ENCODE measurements at regions of chr5 and their contacts with region 1.

Region 1: DNA sequence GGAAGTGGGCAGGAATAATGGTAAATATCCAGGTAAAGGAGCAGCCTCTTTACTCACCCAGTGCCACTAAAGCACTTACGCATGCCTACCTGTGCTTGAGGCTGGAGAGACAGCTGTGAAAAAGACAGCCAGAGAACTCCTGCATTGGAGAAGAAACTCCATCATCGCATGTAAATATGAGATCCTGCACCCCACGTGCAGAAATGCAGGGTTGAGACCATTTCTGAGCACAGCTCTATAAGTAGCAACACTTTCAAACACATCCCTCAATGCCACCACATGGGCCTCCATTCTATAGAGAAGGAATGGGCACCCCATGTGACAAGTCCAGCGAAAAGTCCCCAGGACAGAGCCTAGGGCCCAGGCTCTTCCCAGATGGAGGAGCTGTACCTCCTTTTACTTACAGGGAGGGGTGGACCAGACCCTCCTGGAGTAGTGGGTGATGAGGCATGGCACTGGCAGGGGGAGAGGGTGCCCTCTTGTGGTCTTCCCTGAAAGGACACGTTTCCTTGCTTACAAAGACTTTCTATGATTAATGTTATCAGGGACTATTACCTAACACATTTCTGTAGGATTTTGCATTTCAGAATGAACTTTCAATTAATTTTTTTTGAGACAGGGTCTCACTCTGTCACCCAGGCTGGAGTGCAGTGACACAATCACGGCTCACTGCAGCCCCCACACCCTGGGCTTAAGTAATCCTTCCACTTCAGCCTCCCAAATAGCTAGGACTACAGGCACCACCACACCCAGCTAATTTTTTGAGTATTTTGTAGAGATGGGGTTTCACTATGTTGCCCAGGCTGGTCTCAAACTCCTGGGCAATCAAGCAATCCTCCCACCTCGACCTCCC is 55.3 kb upstream of the IL17B start:
- ATAC-seq: peak; percentile 2 to 83 (median 74)
- H3K4me3 ChIP-seq: no peak overlapping the region
- H3K27ac ChIP-seq: no peak overlapping the region
- H3K4me1 ChIP-seq: no peaks in the 10 kb centered on the region

Region 2: DNA sequence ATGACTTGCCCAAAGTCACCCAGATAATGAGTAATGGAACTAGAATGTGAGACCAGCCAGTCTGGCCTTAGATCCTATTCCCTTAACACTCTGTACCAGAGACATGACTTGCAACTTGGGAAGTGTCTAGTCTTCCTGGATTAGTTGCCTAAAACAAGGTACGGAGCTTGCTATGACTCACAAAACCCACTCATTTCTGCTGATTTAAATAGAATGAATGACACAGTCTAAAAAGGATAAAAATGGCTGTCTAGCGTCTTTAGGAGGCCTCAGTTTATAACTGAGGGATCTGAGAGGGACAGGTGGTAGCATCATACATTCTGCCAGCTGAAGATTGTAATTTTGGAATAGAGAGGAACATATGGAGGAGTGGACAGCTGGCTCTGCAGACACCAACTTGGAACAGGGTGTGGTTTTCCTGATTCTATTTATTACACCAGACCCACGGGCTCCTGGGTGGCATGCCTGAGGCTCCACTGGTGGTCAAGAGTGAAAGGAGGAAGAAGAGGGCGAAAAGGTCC is 230.4 kb before region 1 on chr5:
- in situ Hi-C with region 1: no loop called
- ATAC-seq: peak in 2 of 8 experiments; percentile 45 to 75
- H3K4me3 ChIP-seq: no peak overlapping the region
- H3K27ac ChIP-seq: no peak overlapping the region
- H3K4me1 ChIP-seq: no peaks in the 10 kb centered on the region

Region 3: GRCh38 chr5:149381987-149382340 is 52.4 kb before region 1 on chr5:
- in situ Hi-C with region 1: loop called in 2 of 9 experiments (anchors 5 to 10 kb)
- ATAC-seq: peak; percentile 85 to 99 (median 94)
- H3K4me3 ChIP-seq: no peak overlapping the region
- H3K27ac ChIP-seq: no peak overlapping the region
- H3K4me1 ChIP-seq: peaks cover 0 to 11% of the 10 kb centered on the region in 2 donors